ENCODE measurements at regions of chr11 and their contacts with region 1.

Region 1: DNA sequence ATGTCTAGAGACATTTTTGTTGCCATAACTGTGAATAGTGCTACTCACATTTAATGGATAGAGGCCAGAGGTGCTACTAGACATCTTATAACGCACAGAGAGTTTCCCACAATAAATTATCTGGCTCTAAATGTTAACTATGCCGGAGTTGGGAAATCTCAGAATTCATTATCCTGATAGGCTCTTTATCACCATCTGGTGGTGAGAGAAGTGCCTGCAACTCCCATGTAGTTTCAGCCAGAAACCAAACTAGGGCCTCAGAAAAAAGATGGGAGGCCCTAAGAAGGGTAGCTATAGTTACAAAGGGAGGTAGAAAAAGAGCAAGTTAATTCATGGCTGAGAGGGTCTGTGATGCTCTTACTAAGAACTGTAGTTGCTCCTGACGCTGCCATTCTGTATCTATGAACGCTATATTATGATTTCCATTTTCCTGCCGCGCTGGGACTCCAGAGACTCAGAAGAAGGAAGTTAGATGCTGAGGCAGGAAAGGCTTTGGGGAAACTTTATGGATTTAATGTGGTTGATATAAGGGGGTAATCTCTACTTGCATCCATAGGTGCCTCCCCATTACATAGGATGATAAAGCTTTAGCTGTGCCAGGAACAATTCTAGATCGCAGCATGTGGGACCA is 22.9 kb upstream of the MRPL17 start:
- DNase-seq: peak in 3 of 5 donors; percentile 25 to 38 (median 29)
- H3K4me3 ChIP-seq: no peak overlapping the region
- H3K4me3 Mint-ChIP-seq: no peak overlapping the region
- H3K27ac ChIP-seq: no peak overlapping the region
- H3K27ac Mint-ChIP-seq: peak overlapping the region; percentile 42 to 81 (median 68)
- H3K4me1 ChIP-seq: no peaks in the 10 kb centered on the region
- H3K4me1 Mint-ChIP-seq: peaks cover 15 to 30% (median 26%) of the 10 kb centered on the region in 3 donors
- H3K27me3 ChIP-seq: no peaks in the 10 kb centered on the region
- H3K27me3 Mint-ChIP-seq: no peaks in the 10 kb centered on the region

Region 2: DNA sequence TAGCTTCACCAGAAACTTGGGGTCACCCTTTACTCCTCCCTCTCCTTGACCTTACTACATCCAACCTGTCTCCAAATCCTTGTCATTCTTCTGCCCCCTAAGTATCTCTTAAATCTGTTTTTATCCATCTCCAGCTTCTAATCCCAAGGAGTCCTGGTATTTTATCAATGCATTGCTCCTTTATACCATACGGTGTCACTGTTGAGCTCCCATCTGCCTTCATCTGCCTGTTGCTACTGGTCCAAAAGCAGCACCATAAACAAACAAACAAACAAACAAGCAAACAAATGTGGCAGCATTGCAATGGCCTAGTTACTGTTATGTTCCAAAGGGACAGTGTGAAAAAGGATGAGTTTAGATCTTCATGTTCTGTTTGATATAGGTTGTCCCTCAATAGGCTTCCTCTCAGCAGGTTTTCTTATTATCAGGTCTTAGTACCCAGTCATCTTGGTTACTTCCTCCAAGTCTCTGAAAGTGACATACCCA is 174.7 kb before region 1 on chr11:
- CTCF ChIA-PET with region 1: interaction called, 29 read pairs
- POLR2A ChIA-PET with region 1: no interaction called
- DNase-seq: peak in 2 of 5 donors; percentile 21 to 33
- H3K4me3 ChIP-seq: no peak overlapping the region
- H3K4me3 Mint-ChIP-seq: no peak overlapping the region
- H3K27ac ChIP-seq: no peak overlapping the region
- H3K27ac Mint-ChIP-seq: no peak overlapping the region
- H3K4me1 ChIP-seq: peaks cover 4% of the 10 kb centered on the region
- H3K4me1 Mint-ChIP-seq: peaks cover 7 to 13% (median 12%) of the 10 kb centered on the region in 3 donors
- H3K27me3 ChIP-seq: no peaks in the 10 kb centered on the region
- H3K27me3 Mint-ChIP-seq: no peaks in the 10 kb centered on the region

Region 3: DNA sequence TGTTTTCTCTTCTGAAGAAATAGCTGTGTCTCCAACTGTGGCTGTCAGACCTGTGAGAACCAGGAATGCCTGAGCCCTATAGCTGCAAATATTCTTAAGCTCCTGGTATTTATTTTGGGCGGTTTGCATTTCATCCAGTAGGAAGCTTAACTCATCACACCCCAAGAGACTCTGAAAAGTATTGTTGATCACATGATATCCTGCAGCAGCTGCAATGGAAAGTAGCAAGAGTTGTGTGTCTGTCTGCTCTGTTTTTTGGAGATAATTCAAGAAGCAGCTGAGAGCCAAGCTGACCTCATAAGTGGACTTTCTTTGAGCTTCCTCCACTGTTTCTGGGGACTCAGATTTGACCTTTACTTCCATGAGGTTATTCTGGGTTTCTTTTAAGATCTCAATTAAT is 13.6 kb after region 1 on chr11:
- CTCF ChIA-PET with region 1: interaction called, 12 read pairs
- POLR2A ChIA-PET with region 1: no interaction called
- DNase-seq: no peak
- H3K4me3 ChIP-seq: no peak overlapping the region
- H3K4me3 Mint-ChIP-seq: peak overlapping the region in 1 of 7 donors; percentile 28
- H3K27ac ChIP-seq: no peak overlapping the region
- H3K27ac Mint-ChIP-seq: peak overlapping the region in 7 of 8 donors; percentile 21 to 84 (median 72)
- H3K4me1 ChIP-seq: peaks cover 62% of the 10 kb centered on the region
- H3K4me1 Mint-ChIP-seq: peaks cover 86 to 99% (median 95%) of the 10 kb centered on the region in 3 donors
- H3K27me3 ChIP-seq: no peaks in the 10 kb centered on the region
- H3K27me3 Mint-ChIP-seq: no peaks in the 10 kb centered on the region

Region 4: GRCh38 chr11:6727971-6728760 is 22.1 kb after region 1 on chr11:
- CTCF ChIA-PET with region 1: interaction called, 10 read pairs
- POLR2A ChIA-PET with region 1: no interaction called
- DNase-seq: no peak
- H3K4me3 ChIP-seq: no peak overlapping the region
- H3K4me3 Mint-ChIP-seq: peak overlapping the region in 4 of 7 donors; percentile 2 to 44 (median 18)
- H3K27ac ChIP-seq: peak overlapping the region; percentile 54
- H3K27ac Mint-ChIP-seq: peak overlapping the region; percentile 57 to 96 (median 72)
- H3K4me1 ChIP-seq: peaks cover 61% of the 10 kb centered on the region
- H3K4me1 Mint-ChIP-seq: peaks cover 74 to 97% (median 95%) of the 10 kb centered on the region in 3 donors
- H3K27me3 ChIP-seq: no peaks in the 10 kb centered on the region
- H3K27me3 Mint-ChIP-seq: no peaks in the 10 kb centered on the region

Region 5: GRCh38 chr11:6737872-6738466 is 31.9 kb after region 1 on chr11:
- CTCF ChIA-PET with region 1: interaction called, 10 read pairs
- POLR2A ChIA-PET with region 1: no interaction called
- DNase-seq: peak; percentile 50 to 75 (median 66)
- H3K4me3 ChIP-seq: no peak overlapping the region
- H3K4me3 Mint-ChIP-seq: peak overlapping the region in 6 of 7 donors; percentile 5 to 55 (median 36)
- H3K27ac ChIP-seq: no peak overlapping the region
- H3K27ac Mint-ChIP-seq: peak overlapping the region; percentile 54 to 95 (median 80)
- H3K4me1 ChIP-seq: peaks cover 82% of the 10 kb centered on the region
- H3K4me1 Mint-ChIP-seq: peaks cover 85 to 96% (median 95%) of the 10 kb centered on the region in 3 donors
- H3K27me3 ChIP-seq: no peaks in the 10 kb centered on the region
- H3K27me3 Mint-ChIP-seq: no peaks in the 10 kb centered on the region

Region 6: GRCh38 chr11:6757373-6757967 is 51.5 kb after region 1 on chr11:
- CTCF ChIA-PET with region 1: interaction called, 17 read pairs
- POLR2A ChIA-PET with region 1: no interaction called
- DNase-seq: peak; percentile 32 to 74 (median 53)
- H3K4me3 ChIP-seq: no peak overlapping the region
- H3K4me3 Mint-ChIP-seq: no peak overlapping the region
- H3K27ac ChIP-seq: no peak overlapping the region
- H3K27ac Mint-ChIP-seq: no peak overlapping the region
- H3K4me1 ChIP-seq: no peaks in the 10 kb centered on the region
- H3K4me1 Mint-ChIP-seq: peaks cover 2 to 16% (median 12%) of the 10 kb centered on the region in 3 donors
- H3K27me3 ChIP-seq: no peaks in the 10 kb centered on the region
- H3K27me3 Mint-ChIP-seq: peaks cover 14 to 15% of the 10 kb centered on the region in 2 donors